ENCODE measurements at regions of chr5 and their contacts with region 1.

Region 1: DNA sequence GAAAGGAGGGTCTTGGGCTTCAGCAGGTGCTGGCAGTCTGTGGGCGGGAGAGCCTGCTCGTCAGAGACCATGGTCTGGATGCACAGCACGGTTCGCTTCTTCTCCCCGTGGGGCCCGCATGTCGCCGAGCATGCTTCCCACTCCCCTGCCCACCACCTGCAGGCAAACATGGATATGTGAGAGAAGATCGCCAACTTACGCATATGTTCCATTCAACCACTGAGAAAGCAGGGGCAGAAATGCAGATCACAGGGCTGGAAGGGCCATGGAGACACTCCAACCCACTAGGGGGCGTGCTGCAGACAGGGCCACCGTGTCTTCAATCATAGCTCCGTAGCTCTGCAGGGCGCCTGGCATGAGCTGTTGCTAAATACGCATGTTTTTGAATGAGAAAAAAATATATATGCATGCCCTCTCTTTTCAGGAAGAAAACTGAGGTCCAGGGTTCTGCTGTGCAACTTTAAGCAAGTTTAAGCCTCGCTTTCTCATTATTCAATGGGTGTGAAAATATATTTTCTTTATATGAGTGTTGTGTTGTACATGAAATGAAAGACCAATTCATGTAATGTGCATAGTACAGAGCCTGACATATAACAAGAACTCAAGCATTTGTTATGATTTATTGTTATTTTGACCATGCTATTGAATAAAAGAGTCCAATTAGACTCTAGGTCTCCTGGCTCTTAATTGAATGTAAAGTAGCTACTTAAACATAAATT is 148.0 kb downstream of the TARS1 start:
- DNase-seq: peak; percentile 23
- H3K4me3 ChIP-seq: no peak overlapping the region
- H3K27ac ChIP-seq: no peak overlapping the region
- H3K4me1 ChIP-seq: no peaks in the 10 kb centered on the region
- H3K27me3 ChIP-seq: no peaks in the 10 kb centered on the region
- CTCF ChIP-seq: peak; percentile 67 to 89
- POLR2A ChIP-seq: no peak

Region 2: GRCh38 chr5:33576726-33577590 is 11.9 kb before region 1 on chr5:
- CTCF ChIA-PET with region 1: interaction called, 27 read pairs
- POLR2A ChIA-PET with region 1: no interaction called
- dilution Hi-C with region 1: no loop called
- intact Hi-C with region 1: no loop called
- DNase-seq: no peak
- H3K4me3 ChIP-seq: no peak overlapping the region
- H3K27ac ChIP-seq: no peak overlapping the region
- H3K4me1 ChIP-seq: no peaks in the 10 kb centered on the region
- H3K27me3 ChIP-seq: peaks cover 0 to 2% of the 10 kb centered on the region in 2 experiments
- CTCF ChIP-seq: no peak
- POLR2A ChIP-seq: no peak

Region 3: GRCh38 chr5:33601881-33602280 is 13.1 kb after region 1 on chr5:
- CTCF ChIA-PET with region 1: interaction called, 27 read pairs
- POLR2A ChIA-PET with region 1: no interaction called
- dilution Hi-C with region 1: no loop called
- intact Hi-C with region 1: no loop called
- DNase-seq: no peak
- H3K4me3 ChIP-seq: no peak overlapping the region
- H3K27ac ChIP-seq: no peak overlapping the region
- H3K4me1 ChIP-seq: no peaks in the 10 kb centered on the region
- H3K27me3 ChIP-seq: no peaks in the 10 kb centered on the region
- CTCF ChIP-seq: no peak
- POLR2A ChIP-seq: no peak

Region 4: GRCh38 chr5:33891788-33892619 is 303.2 kb after region 1 on chr5 and contains the start of gene ADAMTS12:
- CTCF ChIA-PET with region 1: interaction called, 10 read pairs
- POLR2A ChIA-PET with region 1: no interaction called
- dilution Hi-C with region 1: no loop called
- intact Hi-C with region 1: no loop called
- DNase-seq: no peak
- H3K4me3 ChIP-seq: peak within 1 kb of the TSS in 2 of 3 experiments; percentile 53 to 71
- H3K27ac ChIP-seq: no peak within 1 kb of the TSS
- H3K4me1 ChIP-seq: peaks cover 10% of the 10 kb centered on the region
- H3K27me3 ChIP-seq: peaks cover 34 to 35% of the 10 kb centered on the region in 2 experiments
- CTCF ChIP-seq: no peak
- POLR2A ChIP-seq: no peak
- total RNA-seq, gene ADAMTS12: 0.88 TPM in 1 of 2 replicates, not detected in the other

Region 5: DNA sequence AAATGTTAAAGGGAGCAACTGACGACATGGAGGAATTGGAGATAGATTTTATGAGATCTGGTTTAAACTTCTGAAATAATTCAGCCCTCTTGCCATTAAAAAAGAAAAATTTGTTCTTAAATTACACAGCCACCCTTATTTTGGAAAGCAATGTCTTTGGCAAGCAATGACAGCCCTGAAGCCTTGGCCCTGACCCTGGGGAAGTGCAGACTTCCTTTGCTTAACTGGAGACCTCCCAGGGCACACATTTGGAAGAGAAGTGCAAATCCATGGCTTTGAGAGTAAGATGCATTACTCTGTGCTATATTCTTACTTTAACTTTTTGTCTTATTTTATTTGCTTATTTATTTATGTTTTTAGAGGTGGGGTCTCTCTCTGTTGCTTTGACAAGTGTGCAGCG is 369.4 kb after region 1 on chr5:
- CTCF ChIA-PET with region 1: interaction called, 11 read pairs
- POLR2A ChIA-PET with region 1: no interaction called
- dilution Hi-C with region 1: no loop called
- intact Hi-C with region 1: no loop called
- DNase-seq: no peak
- H3K4me3 ChIP-seq: no peak overlapping the region
- H3K27ac ChIP-seq: no peak overlapping the region
- H3K4me1 ChIP-seq: no peaks in the 10 kb centered on the region
- H3K27me3 ChIP-seq: peaks cover 0 to 9% of the 10 kb centered on the region in 2 experiments
- CTCF ChIP-seq: no peak
- POLR2A ChIP-seq: no peak

Measured in endothelial cell of umbilical vein (primary cell).